ENCODE measurements at regions of chr1 and their contacts with region 1.

Region 1: GRCh38 chr1:7218210-7218832 is 433.1 kb downstream of the CAMTA1 start:
- DNase-seq: peak; percentile 51
- ATAC-seq: peak; percentile 74
- H3K4me3 ChIP-seq: no peak overlapping the region
- H3K27ac ChIP-seq: no peak overlapping the region
- H3K4me1 ChIP-seq: peaks cover 3 to 7% of the 10 kb centered on the region in 2 experiments; a peak in 2 of 4 replicates
- H3K27me3 ChIP-seq: no peaks in the 10 kb centered on the region
- CTCF ChIP-seq: peak; percentile 83 to 95 (median 90)
- POLR2A ChIP-seq: no peak
- RAD21 ChIP-seq: peak; percentile 93

Region 2: DNA sequence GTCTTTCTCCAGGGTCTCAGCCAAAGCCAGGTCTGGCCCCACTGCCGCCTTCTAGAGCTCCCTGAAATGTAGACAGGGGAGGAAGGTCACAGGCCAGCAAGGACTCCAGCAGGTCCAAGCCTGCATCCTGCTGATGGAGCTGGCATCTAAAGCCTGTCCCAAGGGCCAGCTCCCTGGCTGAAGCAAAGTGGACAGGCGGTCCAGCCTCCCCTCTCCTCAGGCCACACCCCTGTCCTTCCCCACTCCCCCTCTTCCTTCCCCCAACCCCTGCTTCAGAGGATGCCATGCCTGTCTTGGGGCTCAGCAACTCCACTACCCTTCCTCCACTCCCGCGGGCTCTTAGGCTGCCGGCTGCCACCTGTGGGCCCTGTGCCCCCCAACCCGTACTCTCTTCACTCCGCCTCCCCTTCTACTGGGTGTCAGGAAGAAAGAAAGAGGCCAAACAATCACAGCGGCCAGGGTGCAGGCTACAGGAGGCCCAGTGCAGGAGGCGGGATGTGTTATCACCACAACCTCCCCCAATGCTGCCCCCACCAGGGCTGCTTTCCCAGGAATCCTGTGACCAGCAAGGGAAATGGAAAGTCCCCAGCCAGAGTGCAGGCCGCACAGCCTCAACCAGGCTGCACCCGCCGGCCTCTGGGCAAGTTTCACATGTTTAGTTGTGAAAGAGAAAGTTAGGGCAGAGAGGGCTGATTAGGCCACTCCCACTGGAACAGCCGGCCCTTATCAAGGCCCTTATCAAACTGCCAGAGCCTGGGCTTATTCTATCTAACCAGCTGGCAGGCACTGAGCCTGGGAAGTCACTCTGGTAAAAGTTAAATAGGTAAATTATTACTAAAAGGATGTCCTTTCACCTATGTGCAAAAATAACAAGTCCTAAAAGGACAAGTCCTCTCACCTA is 858.9 kb before region 1 on chr1:
- CTCF ChIA-PET with region 1: no interaction called
- POLR2A ChIA-PET with region 1: no interaction called
- RAD21 ChIA-PET with region 1: no interaction called
- intact Hi-C with region 1: loop called (anchors 10 kb)
- DNase-seq: no peak
- ATAC-seq: no peak
- H3K4me3 ChIP-seq: no peak overlapping the region
- H3K27ac ChIP-seq: peak overlapping the region; percentile 51; the same call in 1 of the 2 replicates
- H3K4me1 ChIP-seq: peaks cover 35 to 65% of the 10 kb centered on the region in 2 experiments
- H3K27me3 ChIP-seq: no peaks in the 10 kb centered on the region
- CTCF ChIP-seq: no peak
- POLR2A ChIP-seq: no peak
- RAD21 ChIP-seq: no peak

Region 3: GRCh38 chr1:6438047-6438525 is 780.2 kb before region 1 on chr1:
- CTCF ChIA-PET with region 1: no interaction called
- POLR2A ChIA-PET with region 1: no interaction called
- RAD21 ChIA-PET with region 1: no interaction called
- intact Hi-C with region 1: loop called (anchors 10 kb)
- DNase-seq: no peak
- ATAC-seq: peak; percentile 52
- H3K4me3 ChIP-seq: no peak overlapping the region
- H3K27ac ChIP-seq: no peak overlapping the region
- H3K4me1 ChIP-seq: peaks cover 8 to 27% of the 10 kb centered on the region in 2 experiments
- H3K27me3 ChIP-seq: no peaks in the 10 kb centered on the region
- CTCF ChIP-seq: peak in 2 of 3 experiments; percentile 93; a peak in 4 of 6 replicates
- POLR2A ChIP-seq: no peak
- RAD21 ChIP-seq: no peak

Region 4: GRCh38 chr1:6489799-6490180 is 728.5 kb before region 1 on chr1:
- CTCF ChIA-PET with region 1: no interaction called
- POLR2A ChIA-PET with region 1: no interaction called
- RAD21 ChIA-PET with region 1: no interaction called
- intact Hi-C with region 1: loop called (anchors 5 kb)
- DNase-seq: peak; percentile 48
- ATAC-seq: peak; percentile 73
- H3K4me3 ChIP-seq: peak overlapping the region; percentile 91 to 96
- H3K27ac ChIP-seq: peak overlapping the region; percentile 87
- H3K4me1 ChIP-seq: peaks cover 25 to 51% of the 10 kb centered on the region in 2 experiments
- H3K27me3 ChIP-seq: no peaks in the 10 kb centered on the region
- CTCF ChIP-seq: peak in 2 of 3 experiments; percentile 89 to 91; a peak in 4 of 6 replicates
- POLR2A ChIP-seq: no peak
- RAD21 ChIP-seq: no peak

Region 5: DNA sequence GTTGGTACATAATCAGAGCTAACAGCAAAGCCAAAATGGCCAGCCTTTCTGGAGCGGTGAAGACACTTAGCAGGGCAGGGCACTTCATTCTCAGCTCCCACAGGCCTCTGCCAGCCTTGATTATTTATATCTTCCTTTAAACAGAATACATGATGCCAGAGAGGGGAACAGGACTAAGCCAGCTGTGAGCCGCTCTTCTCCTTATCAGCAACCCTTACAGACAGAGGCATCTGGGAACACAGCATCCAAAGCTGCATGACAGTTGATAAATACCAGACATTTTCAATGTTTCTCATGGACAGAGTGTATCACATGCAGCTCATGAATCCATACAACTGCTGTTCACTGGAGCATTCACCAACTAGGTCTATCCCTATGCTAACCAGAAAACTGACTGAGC is 545.8 kb before region 1 on chr1:
- CTCF ChIA-PET with region 1: no interaction called
- POLR2A ChIA-PET with region 1: no interaction called
- RAD21 ChIA-PET with region 1: no interaction called
- intact Hi-C with region 1: no loop called
- DNase-seq: no peak
- ATAC-seq: no peak
- H3K4me3 ChIP-seq: no peak overlapping the region
- H3K27ac ChIP-seq: no peak overlapping the region
- H3K4me1 ChIP-seq: no peaks in the 10 kb centered on the region
- H3K27me3 ChIP-seq: no peaks in the 10 kb centered on the region
- CTCF ChIP-seq: no peak
- POLR2A ChIP-seq: no peak
- RAD21 ChIP-seq: no peak

Region 6: DNA sequence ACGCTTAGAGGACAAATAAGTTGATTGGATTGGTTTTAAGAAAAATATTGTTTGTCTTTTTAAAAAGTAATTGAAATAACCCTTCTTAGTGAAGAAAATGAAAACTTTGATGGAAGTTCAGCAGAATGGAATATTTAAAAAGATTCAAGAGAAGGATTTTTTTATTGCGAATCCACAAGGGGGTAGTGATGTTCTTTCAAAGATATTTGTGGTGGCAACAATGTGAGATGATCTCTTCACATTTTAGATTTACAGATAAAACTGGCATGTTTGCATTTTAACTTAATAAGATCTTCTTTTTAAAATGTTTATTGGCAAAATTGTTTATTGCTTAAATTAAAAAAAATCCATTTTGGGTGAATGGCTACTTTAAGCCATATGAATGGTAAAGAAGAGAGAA is 424.2 kb before region 1 on chr1:
- CTCF ChIA-PET with region 1: no interaction called
- POLR2A ChIA-PET with region 1: no interaction called
- RAD21 ChIA-PET with region 1: no interaction called
- intact Hi-C with region 1: loop called (anchors 1 kb)
- DNase-seq: peak; percentile 26
- ATAC-seq: no peak
- H3K4me3 ChIP-seq: no peak overlapping the region
- H3K27ac ChIP-seq: no peak overlapping the region
- H3K4me1 ChIP-seq: no peaks in the 10 kb centered on the region
- H3K27me3 ChIP-seq: no peaks in the 10 kb centered on the region
- CTCF ChIP-seq: peak in 2 of 3 experiments; percentile 60 to 62; a peak in 3 of 6 replicates
- POLR2A ChIP-seq: no peak
- RAD21 ChIP-seq: peak; percentile 69; the same call in 1 of the 2 replicates

Region 7: GRCh38 chr1:6889875-6890480 is 328.3 kb before region 1 on chr1:
- CTCF ChIA-PET with region 1: interaction called, 3 read pairs
- POLR2A ChIA-PET with region 1: no interaction called
- RAD21 ChIA-PET with region 1: no interaction called
- intact Hi-C with region 1: loop called (anchors 10 kb)
- DNase-seq: peak; percentile 44
- ATAC-seq: peak; percentile 98
- H3K4me3 ChIP-seq: no peak overlapping the region
- H3K27ac ChIP-seq: no peak overlapping the region
- H3K4me1 ChIP-seq: no peaks in the 10 kb centered on the region
- H3K27me3 ChIP-seq: no peaks in the 10 kb centered on the region
- CTCF ChIP-seq: peak; percentile 78 to 91 (median 87)
- POLR2A ChIP-seq: no peak
- RAD21 ChIP-seq: peak; percentile 72

Region 8: DNA sequence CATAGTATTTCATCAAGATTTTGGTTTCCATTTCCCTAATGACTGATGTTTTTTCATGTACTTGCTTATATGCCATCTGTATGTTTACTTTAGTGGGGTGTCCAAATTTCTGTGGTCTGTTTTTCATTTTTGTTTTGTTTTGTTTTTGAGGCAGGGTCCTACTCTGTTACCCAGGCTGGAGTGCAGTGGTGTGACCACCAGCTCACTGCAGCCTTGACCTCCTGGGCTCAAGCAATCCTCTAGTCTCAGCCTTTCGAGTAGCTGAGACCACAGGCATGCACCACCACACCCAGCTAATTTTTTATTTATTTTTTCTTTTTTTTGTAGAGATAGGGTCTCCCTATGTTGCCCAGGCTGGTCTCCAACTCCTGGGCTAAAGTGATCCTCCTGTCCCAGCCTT is 174.8 kb after region 1 on chr1:
- CTCF ChIA-PET with region 1: no interaction called
- POLR2A ChIA-PET with region 1: no interaction called
- RAD21 ChIA-PET with region 1: no interaction called
- intact Hi-C with region 1: no loop called
- DNase-seq: no peak
- ATAC-seq: no peak
- H3K4me3 ChIP-seq: no peak overlapping the region
- H3K27ac ChIP-seq: no peak overlapping the region
- H3K4me1 ChIP-seq: peaks cover 0 to under 1% of the 10 kb centered on the region in 2 experiments; a peak in 2 of 4 replicates
- H3K27me3 ChIP-seq: no peaks in the 10 kb centered on the region
- CTCF ChIP-seq: no peak
- POLR2A ChIP-seq: no peak
- RAD21 ChIP-seq: no peak